Heart left ventricle (tissue), 16 donors: ENCODE measurements at regions of chr21 and their contacts with region 1.

Region 1: DNA sequence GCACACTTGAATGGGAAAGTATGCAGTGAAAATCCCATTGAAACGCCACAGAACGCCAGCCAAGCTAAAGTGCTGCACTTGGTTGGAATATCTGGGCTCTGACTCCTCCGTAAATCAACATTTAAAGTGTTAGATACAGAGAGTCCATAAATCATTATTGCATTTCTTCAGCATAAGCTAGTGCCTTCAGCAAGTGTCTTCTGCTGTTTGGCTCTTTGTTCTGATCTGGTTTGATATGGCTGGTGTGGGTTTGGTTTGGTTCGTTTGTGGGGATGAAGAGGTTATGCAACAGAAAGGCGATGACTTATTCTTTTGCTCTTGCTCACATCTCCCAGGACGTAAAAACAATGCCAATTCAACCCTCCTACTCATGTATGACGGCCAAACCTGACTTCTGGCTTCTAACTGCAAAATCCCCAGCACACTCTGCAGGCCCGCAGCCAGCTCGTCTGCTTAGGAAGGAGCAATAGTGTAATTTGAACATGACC is 121.8 kb upstream of the ERG start:
- DNase-seq: peak in 4 of 5 donors; percentile 22 to 57 (median 40)
- ATAC-seq: peak in 3 of 4 donors; percentile 64 to 88 (median 72)
- H3K4me3 ChIP-seq: no peak overlapping the region
- H3K27ac ChIP-seq: no peak overlapping the region
- H3K4me1 ChIP-seq: peaks cover 0 to 11% (median 0%) of the 10 kb centered on the region in 12 donors
- H3K27me3 ChIP-seq: no peaks in the 10 kb centered on the region
- CTCF ChIP-seq: no peak
- POLR2A ChIP-seq: no peak

Region 2: GRCh38 chr21:38567335-38567969 is 52.6 kb before region 1 on chr21:
- intact Hi-C with region 1: loop called in 1 of 10 experiments (anchors 5 kb)
- DNase-seq: no peak
- ATAC-seq: peak in 1 of 4 donors; percentile 56
- H3K4me3 ChIP-seq: peak overlapping the region in 5 of 12 donors; percentile 13 to 42 (median 23)
- H3K27ac ChIP-seq: no peak overlapping the region
- H3K4me1 ChIP-seq: no peaks in the 10 kb centered on the region
- H3K27me3 ChIP-seq: peaks cover 0 to 16% (median 0%) of the 10 kb centered on the region in 9 donors
- CTCF ChIP-seq: no peak
- POLR2A ChIP-seq: no peak